CD8-positive, alpha-beta T cell (primary cell): ENCODE measurements at regions of chr16 and their contacts with region 1.

Region 1: DNA sequence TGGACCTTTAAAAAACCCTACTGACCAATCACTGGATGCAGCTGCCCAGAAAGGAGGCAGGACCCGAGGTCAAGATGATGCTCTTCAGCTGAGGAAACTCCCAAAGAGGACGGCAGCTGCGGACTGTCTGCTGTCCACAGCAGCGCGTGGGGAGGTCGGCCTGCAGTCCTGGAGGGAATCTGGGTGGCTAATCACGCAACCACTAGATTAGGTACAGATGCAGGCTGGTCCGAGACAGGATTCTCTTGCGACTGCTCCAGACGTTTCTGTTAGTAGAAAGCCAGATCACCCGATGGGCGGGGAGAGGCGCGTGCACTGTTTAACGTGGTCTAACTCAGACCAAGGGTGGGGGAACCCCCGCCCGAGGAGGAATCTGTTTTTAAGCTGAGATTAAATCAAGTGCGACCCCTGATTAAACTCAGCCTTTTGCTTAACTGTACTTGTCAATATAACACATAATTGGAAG is 8.8 kb downstream of the CTRB2 start:
- DNase-seq: no peak
- ATAC-seq: no peak
- H3K4me3 ChIP-seq: no peak overlapping the region
- H3K4me3 Mint-ChIP-seq: no peak overlapping the region
- H3K27ac ChIP-seq: no peak overlapping the region
- H3K27ac Mint-ChIP-seq: no peak overlapping the region
- H3K4me1 ChIP-seq: peaks cover 14% of the 10 kb centered on the region
- H3K4me1 Mint-ChIP-seq: peaks cover 18% of the 10 kb centered on the region
- H3K27me3 ChIP-seq: no peaks in the 10 kb centered on the region
- H3K27me3 Mint-ChIP-seq: peaks cover 25% of the 10 kb centered on the region
- CTCF ChIP-seq: no peak

Region 2: GRCh38 chr16:75238132-75238852 is 40.1 kb after region 1 on chr16:
- CTCF ChIA-PET with region 1: interaction called, 72 read pairs
- POLR2A ChIA-PET with region 1: no interaction called
- intact Hi-C with region 1: loop called (anchors 1 to 5 kb)
- DNase-seq: no peak
- ATAC-seq: no peak
- H3K4me3 ChIP-seq: no peak overlapping the region
- H3K4me3 Mint-ChIP-seq: no peak overlapping the region
- H3K27ac ChIP-seq: no peak overlapping the region
- H3K27ac Mint-ChIP-seq: no peak overlapping the region
- H3K4me1 ChIP-seq: no peaks in the 10 kb centered on the region
- H3K4me1 Mint-ChIP-seq: peaks cover 2% of the 10 kb centered on the region
- H3K27me3 ChIP-seq: no peaks in the 10 kb centered on the region
- H3K27me3 Mint-ChIP-seq: no peaks in the 10 kb centered on the region
- CTCF ChIP-seq: no peak

Region 3: GRCh38 chr16:75385507-75386152 is 187.5 kb after region 1 on chr16:
- CTCF ChIA-PET with region 1: interaction called, 71 read pairs
- POLR2A ChIA-PET with region 1: interaction called, 4 read pairs
- intact Hi-C with region 1: loop called (anchors 1 kb)
- DNase-seq: peak in 3 of 9 experiments; percentile 5 to 79 (median 70)
- ATAC-seq: peak; percentile 26
- H3K4me3 ChIP-seq: no peak overlapping the region
- H3K4me3 Mint-ChIP-seq: no peak overlapping the region
- H3K27ac ChIP-seq: no peak overlapping the region
- H3K27ac Mint-ChIP-seq: no peak overlapping the region
- H3K4me1 ChIP-seq: peaks cover 4% of the 10 kb centered on the region
- H3K4me1 Mint-ChIP-seq: peaks cover 16% of the 10 kb centered on the region
- H3K27me3 ChIP-seq: no peaks in the 10 kb centered on the region
- H3K27me3 Mint-ChIP-seq: no peaks in the 10 kb centered on the region
- CTCF ChIP-seq: peak; percentile 75

Region 4: GRCh38 chr16:75402821-75403475 is 204.8 kb after region 1 on chr16:
- CTCF ChIA-PET with region 1: interaction called, 32 read pairs
- POLR2A ChIA-PET with region 1: no interaction called
- intact Hi-C with region 1: loop called (anchors 1 kb)
- DNase-seq: peak in 2 of 9 experiments; percentile 41 to 50
- ATAC-seq: peak; percentile 44
- H3K4me3 ChIP-seq: no peak overlapping the region
- H3K4me3 Mint-ChIP-seq: no peak overlapping the region
- H3K27ac ChIP-seq: no peak overlapping the region
- H3K27ac Mint-ChIP-seq: no peak overlapping the region
- H3K4me1 ChIP-seq: no peaks in the 10 kb centered on the region
- H3K4me1 Mint-ChIP-seq: no peaks in the 10 kb centered on the region
- H3K27me3 ChIP-seq: no peaks in the 10 kb centered on the region
- H3K27me3 Mint-ChIP-seq: no peaks in the 10 kb centered on the region
- CTCF ChIP-seq: peak; percentile 61

Region 5: GRCh38 chr16:77171745-77172635 is 1973.8 kb after region 1 on chr16:
- CTCF ChIA-PET with region 1: interaction called, 3 read pairs
- POLR2A ChIA-PET with region 1: no interaction called
- intact Hi-C with region 1: loop called in 1 of 2 experiments (anchors 10 kb)
- DNase-seq: peak in 4 of 9 experiments; percentile 12 to 68 (median 41)
- ATAC-seq: peak; percentile 64
- H3K4me3 ChIP-seq: no peak overlapping the region
- H3K4me3 Mint-ChIP-seq: no peak overlapping the region
- H3K27ac ChIP-seq: no peak overlapping the region
- H3K27ac Mint-ChIP-seq: no peak overlapping the region
- H3K4me1 ChIP-seq: no peaks in the 10 kb centered on the region
- H3K4me1 Mint-ChIP-seq: no peaks in the 10 kb centered on the region
- H3K27me3 ChIP-seq: peaks cover 0 to 4% of the 10 kb centered on the region in 2 experiments
- H3K27me3 Mint-ChIP-seq: peaks cover 48% of the 10 kb centered on the region
- CTCF ChIP-seq: peak; percentile 83